ENCODE measurements at regions of chr1 and their contacts with region 1.

Region 1: GRCh38 chr1:159891275-159892157 is 8.4 kb downstream of the CFAP45 start:
- DNase-seq: peak; percentile 81 to 90 (median 86)
- ATAC-seq: peak; percentile 79 to 91 (median 89)
- H3K4me3 ChIP-seq: no peak overlapping the region
- H3K27ac ChIP-seq: peak overlapping the region in 2 of 12 donors; percentile 80 to 85
- H3K4me1 ChIP-seq: peaks cover 0 to 48% (median 23%) of the 10 kb centered on the region in 12 donors
- H3K27me3 ChIP-seq: no peaks in the 10 kb centered on the region
- CTCF ChIP-seq: peak; percentile 84 to 98 (median 90)
- POLR2A ChIP-seq: no peak

Region 2: GRCh38 chr1:159161001-159161718 is 730.4 kb before region 1 on chr1:
- intact Hi-C with region 1: loop called in 3 of 10 experiments (anchors 5 to 10 kb)
- DNase-seq: peak; percentile 64 to 73 (median 67)
- ATAC-seq: peak; percentile 96 to 99 (median 98)
- H3K4me3 ChIP-seq: no peak overlapping the region
- H3K27ac ChIP-seq: peak overlapping the region in 2 of 12 donors; percentile 50 to 58
- H3K4me1 ChIP-seq: peaks cover 0 to 7% (median 0%) of the 10 kb centered on the region in 12 donors
- H3K27me3 ChIP-seq: peaks cover 0 to 28% (median 0%) of the 10 kb centered on the region in 9 donors
- CTCF ChIP-seq: peak; percentile 81 to 97 (median 91)
- POLR2A ChIP-seq: no peak

Region 3: GRCh38 chr1:159763686-159764085 is 127.8 kb before region 1 on chr1:
- intact Hi-C with region 1: no loop called
- DNase-seq: no peak
- ATAC-seq: no peak
- H3K4me3 ChIP-seq: no peak overlapping the region
- H3K27ac ChIP-seq: no peak overlapping the region
- H3K4me1 ChIP-seq: no peaks in the 10 kb centered on the region
- H3K27me3 ChIP-seq: peaks cover 0 to 6% (median 0%) of the 10 kb centered on the region in 9 donors
- CTCF ChIP-seq: no peak
- POLR2A ChIP-seq: no peak

Region 4: DNA sequence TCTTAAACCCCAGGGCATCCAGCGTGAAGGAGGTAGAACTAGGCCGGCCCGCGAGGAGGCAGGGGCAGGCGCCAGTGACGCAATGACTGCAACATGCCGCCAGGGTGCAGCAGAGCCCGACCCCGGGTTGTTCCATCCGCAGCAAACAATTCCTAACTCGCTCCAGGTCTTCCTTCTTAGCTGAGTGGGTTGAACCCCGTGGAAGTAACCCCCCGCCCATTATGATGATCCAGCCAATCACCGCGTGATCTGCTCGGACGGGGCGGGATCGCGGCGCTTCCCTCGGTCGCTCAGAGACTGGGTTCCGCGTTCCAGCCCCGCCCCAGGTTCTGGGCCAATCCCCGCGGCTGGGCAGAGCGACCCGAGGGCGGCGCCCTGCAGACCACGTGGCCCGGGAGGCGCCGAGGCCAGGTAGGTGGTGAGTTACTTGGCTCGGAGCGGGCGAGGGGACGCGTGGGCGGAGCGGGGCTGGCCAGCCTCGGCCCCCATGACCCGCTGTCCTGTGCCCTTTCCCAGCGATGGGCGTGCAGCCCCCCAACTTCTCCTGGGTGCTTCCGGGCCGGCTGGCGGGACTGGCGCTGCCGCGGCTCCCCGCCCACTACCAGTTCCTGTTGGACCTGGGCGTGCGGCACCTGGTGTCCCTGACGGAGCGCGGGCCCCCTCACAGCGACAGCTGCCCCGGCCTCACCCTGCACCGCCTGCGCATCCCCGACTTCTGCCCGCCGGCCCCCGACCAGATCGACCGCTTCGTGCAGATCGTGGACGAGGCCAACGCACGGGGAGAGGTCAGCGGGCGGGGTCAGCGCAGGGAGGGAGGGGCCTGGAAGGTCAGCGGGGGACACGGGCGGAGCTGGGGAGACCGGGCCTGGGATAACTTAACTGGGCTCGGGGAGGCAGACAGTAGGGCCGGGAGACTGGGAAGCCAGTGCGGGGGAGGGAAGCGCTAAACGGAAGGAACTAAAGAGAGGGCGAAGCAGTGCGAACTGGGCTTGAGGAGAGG is 110.6 kb before region 1 on chr1 and contains the start of gene DUSP23:
- intact Hi-C with region 1: loop called in 5 of 10 experiments (anchors 5 kb)
- DNase-seq: peak; percentile 98
- ATAC-seq: peak; percentile 99
- H3K4me3 ChIP-seq: peak within 1 kb of the TSS; percentile 60 to 96 (median 78)
- H3K27ac ChIP-seq: peak within 1 kb of the TSS; percentile 71 to 91 (median 78)
- H3K4me1 ChIP-seq: peaks cover 0 to 25% (median 11%) of the 10 kb centered on the region in 12 donors
- H3K27me3 ChIP-seq: no peaks in the 10 kb centered on the region
- CTCF ChIP-seq: peak; percentile 87 to 98 (median 93)
- POLR2A ChIP-seq: peak in 1 of 2 donors; percentile 70
- total RNA-seq, gene DUSP23: 10.0 to 30.3 (median 18.8) TPM

Region 5: GRCh38 chr1:159839116-159839849 is 52.2 kb before region 1 on chr1:
- intact Hi-C with region 1: loop called in 2 of 10 experiments (anchors 1 to 5 kb)
- DNase-seq: no peak
- ATAC-seq: no peak
- H3K4me3 ChIP-seq: no peak overlapping the region
- H3K27ac ChIP-seq: no peak overlapping the region
- H3K4me1 ChIP-seq: no peaks in the 10 kb centered on the region
- H3K27me3 ChIP-seq: no peaks in the 10 kb centered on the region
- CTCF ChIP-seq: no peak
- POLR2A ChIP-seq: no peak

Region 6: DNA sequence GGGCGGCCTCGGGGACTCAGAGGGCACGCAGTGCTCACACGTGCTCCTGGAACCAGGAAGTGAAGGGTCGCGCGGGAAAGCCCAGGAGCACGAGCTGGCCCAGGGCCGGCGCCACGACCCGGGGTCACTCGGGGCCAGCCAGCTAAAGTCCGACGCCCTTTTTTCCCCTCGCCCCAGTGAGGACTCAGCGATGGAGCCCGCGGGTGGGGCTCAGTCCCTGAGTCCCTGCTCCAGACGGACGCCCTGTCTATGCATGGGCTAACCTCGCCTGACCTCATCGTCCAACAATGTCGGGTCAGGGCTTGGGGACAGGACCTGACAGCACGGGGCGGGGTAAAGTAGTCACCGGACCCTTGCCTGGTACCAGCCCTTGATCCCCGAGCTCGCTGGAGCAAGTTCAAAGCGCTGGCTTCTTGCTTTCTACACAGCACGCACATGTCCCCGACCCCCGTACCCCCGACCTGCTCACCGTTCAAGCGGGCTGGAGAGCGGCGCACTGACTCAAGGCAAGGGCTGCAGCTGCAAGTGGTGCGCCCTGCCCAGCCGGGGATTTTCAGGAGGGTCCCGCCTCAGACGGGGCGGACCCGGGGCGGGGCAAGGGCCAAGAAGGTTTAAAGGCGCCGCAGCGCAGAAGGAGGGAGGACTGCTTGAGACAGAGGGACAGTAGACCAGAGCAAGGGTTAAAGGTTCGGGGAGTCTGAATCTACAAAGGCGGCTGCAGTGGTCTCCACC is 33.6 kb after region 1 on chr1 and contains the start of gene TAGLN2:
- intact Hi-C with region 1: loop called in 3 of 10 experiments (anchors 2 to 5 kb)
- DNase-seq: peak; percentile 94 to 96 (median 95)
- ATAC-seq: peak; percentile 77 to 83 (median 80)
- H3K4me3 ChIP-seq: peak within 1 kb of the TSS; percentile 64 to 99 (median 84)
- H3K27ac ChIP-seq: peak within 1 kb of the TSS; percentile 86 to 100 (median 97)
- H3K4me1 ChIP-seq: peaks cover 0 to 51% (median 32%) of the 10 kb centered on the region in 12 donors
- H3K27me3 ChIP-seq: no peaks in the 10 kb centered on the region
- CTCF ChIP-seq: no peak
- POLR2A ChIP-seq: peak in 1 of 2 donors; percentile 96
- total RNA-seq, gene TAGLN2: 84.3 to 246 (median 131) TPM

Region 7: DNA sequence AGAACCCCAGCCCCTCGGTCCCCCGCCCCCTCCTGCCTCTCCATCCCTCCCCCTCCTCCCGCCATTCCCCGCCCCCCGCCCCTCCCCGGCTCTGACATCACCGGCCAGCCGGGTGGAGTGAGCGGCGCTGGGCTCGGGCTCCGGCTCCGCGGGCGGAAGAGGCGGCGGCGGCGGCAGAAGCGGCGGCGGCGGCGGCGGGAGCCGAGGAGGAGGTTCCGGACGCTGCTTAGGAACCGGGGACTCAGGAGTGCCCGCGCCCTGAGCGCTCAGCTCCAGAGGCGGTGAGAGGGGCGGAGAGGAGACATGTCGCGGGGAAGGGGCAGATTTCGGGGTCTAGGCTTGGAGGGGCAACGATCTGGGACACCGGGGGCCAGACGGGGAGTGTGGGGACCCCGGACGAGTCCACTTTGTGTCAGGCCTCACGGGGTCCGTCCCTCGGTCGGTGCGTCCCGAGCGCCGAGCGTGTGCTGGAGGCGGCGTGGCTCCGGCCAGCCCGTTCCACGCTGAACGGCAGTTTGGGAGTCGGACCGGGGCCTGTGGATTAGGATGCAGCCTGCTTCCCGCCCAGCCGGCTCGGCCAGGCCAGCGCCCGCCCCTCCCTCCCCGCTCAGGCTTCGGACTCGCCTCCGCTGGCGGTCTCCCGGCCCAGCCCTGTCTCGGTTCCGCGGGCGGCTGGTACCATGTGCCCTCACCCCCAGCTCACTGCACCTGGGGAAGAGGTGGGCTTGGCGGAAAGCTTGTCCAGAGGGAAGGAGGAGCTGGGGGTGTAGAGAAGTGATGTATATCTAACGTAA is 313.9 kb after region 1 on chr1 and contains the start of gene PEA15:
- intact Hi-C with region 1: no loop called
- DNase-seq: peak; percentile 80 to 91 (median 86)
- ATAC-seq: peak; percentile 60 to 85 (median 80)
- H3K4me3 ChIP-seq: peak within 1 kb of the TSS; percentile 60 to 99 (median 88)
- H3K27ac ChIP-seq: peak within 1 kb of the TSS; percentile 67 to 98 (median 90)
- H3K4me1 ChIP-seq: peaks cover 22 to 60% (median 53%) of the 10 kb centered on the region in 12 donors
- H3K27me3 ChIP-seq: no peaks in the 10 kb centered on the region
- CTCF ChIP-seq: no peak
- POLR2A ChIP-seq: peak; percentile 10 to 83
- total RNA-seq, gene PEA15: 134 to 581 (median 290) TPM